AG04449 (cell line): ENCODE measurements at regions of chr5 and their contacts with region 1.

Region 1: GRCh38 chr5:172454358-172455086 is at the start of gene SH3PXD2B:
- DNase-seq: no peak
- H3K4me3 ChIP-seq: peak within 1 kb of the TSS; percentile 85
- CTCF ChIP-seq: no peak

Region 2: GRCh38 chr5:172245703-172246125 is 208.8 kb before region 1 on chr5:
- CTCF ChIA-PET with region 1: no interaction called
- POLR2A ChIA-PET with region 1: no interaction called
- DNase-seq: no peak
- H3K4me3 ChIP-seq: no peak overlapping the region
- CTCF ChIP-seq: no peak

Region 3: GRCh38 chr5:172412724-172413286 is 41.7 kb before region 1 on chr5:
- CTCF ChIA-PET with region 1: interaction called, 63 read pairs
- POLR2A ChIA-PET with region 1: no interaction called
- DNase-seq: peak; percentile 90
- H3K4me3 ChIP-seq: no peak overlapping the region
- CTCF ChIP-seq: no peak

Region 4: GRCh38 chr5:172437445-172438308 is 16.8 kb before region 1 on chr5:
- CTCF ChIA-PET with region 1: interaction called, 112 read pairs
- POLR2A ChIA-PET with region 1: no interaction called
- DNase-seq: peak; percentile 64
- H3K4me3 ChIP-seq: no peak overlapping the region
- CTCF ChIP-seq: no peak

Region 5: DNA sequence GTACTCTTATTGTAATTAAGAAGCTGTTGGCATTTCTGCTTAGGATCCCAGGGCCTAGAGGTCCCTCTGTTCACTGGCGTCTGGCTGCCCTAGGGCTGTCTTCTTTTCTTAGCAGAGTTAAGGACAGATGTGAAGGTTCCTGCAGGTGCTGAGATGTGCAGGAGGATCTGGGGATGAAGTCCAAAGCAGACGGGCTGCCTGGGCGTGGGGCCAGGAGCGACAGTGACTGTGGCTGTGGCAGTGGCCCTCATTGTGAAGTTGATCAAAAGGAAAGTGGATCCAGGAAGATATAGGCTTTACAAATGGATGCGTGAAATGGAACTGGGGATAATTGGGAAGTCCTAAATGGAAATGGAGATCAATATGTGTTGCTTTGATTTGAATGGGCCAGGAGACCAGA is 18.9 kb after region 1 on chr5:
- CTCF ChIA-PET with region 1: interaction called, 28 read pairs
- POLR2A ChIA-PET with region 1: no interaction called
- DNase-seq: no peak
- H3K4me3 ChIP-seq: no peak overlapping the region
- CTCF ChIP-seq: no peak